SK-N-SH (cell line): ENCODE measurements at regions of chr10 and their contacts with region 1.

Region 1: DNA sequence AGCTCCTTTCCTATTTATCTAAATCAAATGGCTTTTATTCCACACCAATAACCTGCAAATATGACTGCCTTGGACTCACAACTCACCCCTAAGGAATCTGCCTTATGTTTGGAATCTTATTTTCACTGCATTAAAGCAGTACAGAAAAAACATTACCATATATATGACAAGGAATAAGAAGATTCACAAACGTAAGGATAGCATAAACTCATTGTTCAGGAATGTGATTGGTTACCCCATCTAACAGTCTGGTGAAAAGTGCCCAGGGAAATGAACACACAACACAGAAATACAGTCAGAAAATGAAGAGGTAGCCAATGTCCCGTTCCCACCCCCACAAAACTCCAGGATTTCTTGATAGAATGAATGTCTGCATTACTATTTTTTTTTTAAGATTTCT is 2.0 kb downstream of the PPP3CB start:
- DNase-seq: no peak
- H3K4me3 ChIP-seq: peak overlapping the region; percentile 5 to 84; a peak in 3 of 4 replicates
- H3K27ac ChIP-seq: peak overlapping the region in 1 of 2 experiments; percentile 94; a peak in 2 of 4 replicates
- H3K4me1 ChIP-seq: peaks cover 10 to 23% of the 10 kb centered on the region in 2 experiments
- H3K27me3 ChIP-seq: no peaks in the 10 kb centered on the region
- CTCF ChIP-seq: no peak
- EP300 ChIP-seq: no peak
- RAD21 ChIP-seq: no peak

Region 2: GRCh38 chr10:73218431-73219191 is 275.2 kb before region 1 on chr10:
- CTCF ChIA-PET with region 1: no interaction called
- POLR2A ChIA-PET with region 1: no interaction called
- DNase-seq: peak; percentile 7
- H3K4me3 ChIP-seq: no peak overlapping the region
- H3K27ac ChIP-seq: no peak overlapping the region
- H3K4me1 ChIP-seq: no peaks in the 10 kb centered on the region
- H3K27me3 ChIP-seq: no peaks in the 10 kb centered on the region
- CTCF ChIP-seq: peak; percentile 56
- EP300 ChIP-seq: no peak
- RAD21 ChIP-seq: no peak

Region 3: GRCh38 chr10:73413528-73414229 is 80.1 kb before region 1 on chr10 and contains the start of gene ANXA7:
- CTCF ChIA-PET with region 1: interaction called, 3 read pairs
- POLR2A ChIA-PET with region 1: interaction called, 12 read pairs
- DNase-seq: peak; percentile 99
- H3K4me3 ChIP-seq: peak within 1 kb of the TSS; percentile 74 to 83
- H3K27ac ChIP-seq: peak within 1 kb of the TSS; percentile 80 to 88
- H3K4me1 ChIP-seq: peaks cover 7 to 8% of the 10 kb centered on the region in 2 experiments; a peak in 1 of 4 replicates
- H3K27me3 ChIP-seq: no peaks in the 10 kb centered on the region
- CTCF ChIP-seq: no peak; the same call in 1 of the 2 replicates
- EP300 ChIP-seq: no peak
- RAD21 ChIP-seq: no peak
- polyA plus RNA-seq, gene ANXA7: 65.7 and 88.1 TPM in 2 replicates

Region 4: GRCh38 chr10:73517271-73517877 is 23.6 kb after region 1 on chr10:
- CTCF ChIA-PET with region 1: no interaction called
- POLR2A ChIA-PET with region 1: no interaction called
- DNase-seq: no peak
- H3K4me3 ChIP-seq: no peak overlapping the region
- H3K27ac ChIP-seq: no peak overlapping the region
- H3K4me1 ChIP-seq: peaks cover 0 to 7% of the 10 kb centered on the region in 2 experiments; a peak in 1 of 4 replicates
- H3K27me3 ChIP-seq: no peaks in the 10 kb centered on the region
- CTCF ChIP-seq: no peak
- EP300 ChIP-seq: no peak
- RAD21 ChIP-seq: no peak

Region 5: DNA sequence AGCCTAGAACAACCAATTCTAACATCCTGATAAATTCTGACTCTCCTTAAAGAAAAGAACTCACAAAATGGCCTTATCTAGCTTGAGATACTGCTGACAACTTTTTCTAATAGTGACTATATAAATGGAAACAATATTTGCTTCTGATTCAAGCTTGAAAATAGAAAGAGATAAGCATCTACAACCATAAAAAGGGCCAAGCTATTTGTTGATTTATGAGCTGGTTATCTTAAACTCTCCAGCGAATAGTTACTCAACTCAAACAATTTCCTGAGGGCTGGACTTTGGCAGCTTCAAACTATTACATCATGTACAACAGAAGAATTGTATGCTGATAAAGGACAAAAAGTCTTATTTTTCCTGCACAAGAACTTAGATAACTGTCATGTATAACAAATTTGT is 92.8 kb after region 1 on chr10:
- CTCF ChIA-PET with region 1: no interaction called
- POLR2A ChIA-PET with region 1: no interaction called
- DNase-seq: peak; percentile 10
- H3K4me3 ChIP-seq: peak overlapping the region in 1 of 2 experiments; percentile 25; a peak in 1 of 4 replicates
- H3K27ac ChIP-seq: peak overlapping the region; percentile 56 to 79; a peak in 3 of 4 replicates
- H3K4me1 ChIP-seq: peaks cover 0 to 29% of the 10 kb centered on the region in 2 experiments; a peak in 3 of 4 replicates
- H3K27me3 ChIP-seq: no peaks in the 10 kb centered on the region
- CTCF ChIP-seq: no peak
- EP300 ChIP-seq: peak in 1 of 2 experiments; percentile 76; a peak in 2 of 4 replicates
- RAD21 ChIP-seq: no peak

Region 6: GRCh38 chr10:73837072-73837471 is 343.3 kb after region 1 on chr10:
- CTCF ChIA-PET with region 1: no interaction called
- POLR2A ChIA-PET with region 1: no interaction called
- DNase-seq: no peak
- H3K4me3 ChIP-seq: no peak overlapping the region
- H3K27ac ChIP-seq: peak overlapping the region in 1 of 2 experiments; percentile 56; a peak in 2 of 4 replicates
- H3K4me1 ChIP-seq: no peaks in the 10 kb centered on the region; a peak in 1 of 4 replicates
- H3K27me3 ChIP-seq: no peaks in the 10 kb centered on the region
- CTCF ChIP-seq: no peak
- EP300 ChIP-seq: no peak
- RAD21 ChIP-seq: no peak